ENCODE measurements at regions of chr1 and their contacts with region 1.

Region 1: GRCh38 chr1:232805269-232806185 is at the start of gene MAP10:
- DNase-seq: peak; percentile 44 to 88 (median 62)
- ATAC-seq: peak; percentile 78
- H3K4me3 ChIP-seq: peak within 1 kb of the TSS; percentile 80
- H3K4me3 Mint-ChIP-seq: peak within 1 kb of the TSS; percentile 92
- H3K27ac ChIP-seq: peak within 1 kb of the TSS in 1 of 2 donors; percentile 50
- H3K27ac Mint-ChIP-seq: peak within 1 kb of the TSS; percentile 79
- H3K4me1 ChIP-seq: peaks cover 13% of the 10 kb centered on the region
- H3K4me1 Mint-ChIP-seq: peaks cover 32% of the 10 kb centered on the region
- H3K27me3 ChIP-seq: no peaks in the 10 kb centered on the region
- H3K27me3 Mint-ChIP-seq: no peaks in the 10 kb centered on the region
- CTCF ChIP-seq: no peak
- total RNA-seq, gene MAP10: 0.99 to 1.2 TPM

Region 2: GRCh38 chr1:232690285-232690935 is 115.1 kb before region 1 on chr1:
- CTCF ChIA-PET with region 1: no interaction called
- POLR2A ChIA-PET with region 1: no interaction called
- intact Hi-C with region 1: no loop called
- DNase-seq: no peak
- ATAC-seq: no peak
- H3K4me3 ChIP-seq: no peak overlapping the region
- H3K4me3 Mint-ChIP-seq: no peak overlapping the region
- H3K27ac ChIP-seq: no peak overlapping the region
- H3K27ac Mint-ChIP-seq: no peak overlapping the region
- H3K4me1 ChIP-seq: no peaks in the 10 kb centered on the region
- H3K4me1 Mint-ChIP-seq: no peaks in the 10 kb centered on the region
- H3K27me3 ChIP-seq: no peaks in the 10 kb centered on the region
- H3K27me3 Mint-ChIP-seq: peaks cover 19% of the 10 kb centered on the region
- CTCF ChIP-seq: no peak

Region 3: DNA sequence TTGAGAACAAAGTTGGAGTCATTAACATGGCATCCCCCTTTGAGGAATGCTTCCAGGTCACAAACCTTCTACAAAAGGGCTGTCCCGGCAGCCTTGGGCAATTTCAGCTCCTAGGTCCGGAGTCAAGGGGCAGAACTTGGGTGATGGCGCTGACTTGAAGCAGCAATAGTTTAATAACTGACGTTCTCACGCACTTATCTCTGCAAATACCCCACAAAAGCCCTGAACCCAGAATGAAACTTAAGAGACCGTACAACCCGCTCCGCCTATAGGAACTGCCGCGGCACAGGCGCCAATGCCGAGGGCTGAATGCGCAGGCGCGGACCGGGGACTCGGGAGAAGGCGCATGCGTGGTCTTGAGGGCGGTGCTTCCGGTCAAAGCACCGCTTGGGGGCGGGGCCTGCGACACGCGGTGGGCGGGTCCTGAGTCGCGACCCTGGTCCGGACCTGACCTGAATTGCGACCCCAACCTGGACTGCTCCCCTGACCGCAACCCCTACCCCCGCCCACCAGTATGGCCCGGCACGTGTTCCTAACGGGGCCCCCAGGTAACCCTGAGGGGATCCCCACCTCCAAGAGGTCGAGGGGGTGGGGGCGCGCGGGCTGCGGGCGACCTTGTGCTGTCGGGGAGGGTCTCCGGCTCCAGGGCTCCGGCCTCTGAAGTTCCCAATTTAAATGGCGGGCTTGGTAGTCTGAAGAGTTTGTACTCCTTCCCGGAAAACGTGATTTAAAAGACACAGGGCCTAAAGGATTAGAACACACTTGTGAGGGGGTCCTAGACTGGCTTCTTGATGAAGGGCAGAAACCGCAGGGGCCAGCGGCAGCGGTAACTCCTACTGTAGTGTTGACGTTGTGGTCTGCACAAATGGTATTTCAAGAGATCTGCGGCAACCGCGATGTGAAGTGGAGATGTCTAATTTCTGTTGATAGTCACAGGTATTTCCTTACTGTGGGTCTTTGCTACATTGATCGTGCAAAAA is 145.0 kb after region 1 on chr1 and contains the start of gene NTPCR:
- CTCF ChIA-PET with region 1: no interaction called
- POLR2A ChIA-PET with region 1: no interaction called
- intact Hi-C with region 1: loop called (anchors 2 to 10 kb)
- DNase-seq: peak; percentile 86 to 98 (median 94)
- ATAC-seq: peak; percentile 83
- H3K4me3 ChIP-seq: peak within 1 kb of the TSS; percentile 85
- H3K4me3 Mint-ChIP-seq: peak within 1 kb of the TSS; percentile 96
- H3K27ac ChIP-seq: peak within 1 kb of the TSS; percentile 56 to 66
- H3K27ac Mint-ChIP-seq: peak within 1 kb of the TSS; percentile 83
- H3K4me1 ChIP-seq: peaks cover 27% of the 10 kb centered on the region
- H3K4me1 Mint-ChIP-seq: peaks cover 54% of the 10 kb centered on the region
- H3K27me3 ChIP-seq: no peaks in the 10 kb centered on the region
- H3K27me3 Mint-ChIP-seq: no peaks in the 10 kb centered on the region
- CTCF ChIP-seq: no peak
- total RNA-seq, gene NTPCR: 8.5 to 9.3 TPM